Naive thymus-derived CD4-positive, alpha-beta T cell (primary cell): ENCODE measurements at regions of chrX and their contacts with region 1.

Region 1: DNA sequence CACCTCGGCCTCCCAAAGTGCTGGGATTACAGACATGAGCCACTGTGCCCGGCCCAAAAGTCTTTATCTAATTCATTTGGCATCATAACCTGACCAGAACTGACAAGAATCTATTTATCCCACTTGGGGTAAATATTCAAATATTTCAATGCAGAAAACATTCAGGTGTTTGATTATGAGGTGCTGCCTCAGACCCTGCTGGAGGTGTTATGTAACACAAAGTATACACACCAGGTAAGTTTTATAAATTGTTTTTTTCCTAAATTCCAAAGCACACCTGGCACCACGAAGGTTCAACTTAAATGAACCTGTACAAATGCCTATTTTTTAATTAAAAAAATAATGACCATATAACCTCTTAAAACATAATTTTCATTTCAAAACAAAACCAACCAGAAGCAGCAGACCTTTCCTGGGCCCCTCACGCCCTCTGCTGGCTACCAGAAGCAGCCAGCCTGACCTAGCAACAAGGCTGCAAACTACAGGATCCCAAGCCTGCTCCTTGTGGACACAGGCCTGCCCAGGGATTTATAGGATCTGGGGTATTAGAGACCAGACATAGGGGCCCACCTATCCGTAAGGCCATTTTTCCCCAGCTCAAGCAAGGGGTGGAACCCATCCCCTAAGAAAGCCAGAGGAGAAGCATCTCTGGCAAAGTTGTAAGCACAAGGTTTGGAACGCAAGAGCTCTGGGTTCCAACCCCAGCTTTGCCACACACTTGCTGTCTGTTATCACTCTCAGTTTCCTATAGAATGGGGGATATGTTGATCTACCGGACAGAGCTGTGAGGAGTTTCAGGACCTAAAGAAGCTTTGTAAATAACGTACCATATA is 11.7 kb downstream of the OTUD5 start:
- DNase-seq: peak; percentile 30 to 69 (median 46)
- ATAC-seq: peak; percentile 74
- H3K4me3 ChIP-seq: no peak overlapping the region
- H3K4me3 Mint-ChIP-seq: peak overlapping the region; percentile 25 to 61 (median 50)
- H3K27ac ChIP-seq: peak overlapping the region; percentile 22
- H3K27ac Mint-ChIP-seq: peak overlapping the region; percentile 44 to 88 (median 71)
- H3K4me1 ChIP-seq: peaks cover 23 to 25% of the 10 kb centered on the region in 2 donors
- H3K4me1 Mint-ChIP-seq: peaks cover 20 to 59% (median 48%) of the 10 kb centered on the region in 7 donors
- H3K27me3 ChIP-seq: no peaks in the 10 kb centered on the region
- H3K27me3 Mint-ChIP-seq: no peaks in the 10 kb centered on the region

Region 2: GRCh38 chrX:48648336-48648751 is 297.4 kb before region 1 on chrX:
- CTCF ChIA-PET with region 1: interaction called, 7 read pairs
- POLR2A ChIA-PET with region 1: interaction called, 5 read pairs
- intact Hi-C with region 1: loop called in 1 of 2 experiments (anchors 1 kb)
- DNase-seq: peak in 8 of 9 donors; percentile 17 to 54 (median 38)
- ATAC-seq: peak; percentile 70
- H3K4me3 ChIP-seq: no peak overlapping the region
- H3K4me3 Mint-ChIP-seq: no peak overlapping the region
- H3K27ac ChIP-seq: no peak overlapping the region
- H3K27ac Mint-ChIP-seq: peak overlapping the region in 3 of 9 donors; percentile 42 to 58 (median 53)
- H3K4me1 ChIP-seq: no peaks in the 10 kb centered on the region
- H3K4me1 Mint-ChIP-seq: peaks cover 0 to 18% (median 13%) of the 10 kb centered on the region in 7 donors
- H3K27me3 ChIP-seq: no peaks in the 10 kb centered on the region
- H3K27me3 Mint-ChIP-seq: no peaks in the 10 kb centered on the region

Region 3: GRCh38 chrX:48703642-48704481 is 241.9 kb before region 1 on chrX:
- CTCF ChIA-PET with region 1: no interaction called
- POLR2A ChIA-PET with region 1: no interaction called
- intact Hi-C with region 1: no loop called
- DNase-seq: no peak
- ATAC-seq: no peak
- H3K4me3 ChIP-seq: no peak overlapping the region
- H3K4me3 Mint-ChIP-seq: no peak overlapping the region
- H3K27ac ChIP-seq: no peak overlapping the region
- H3K27ac Mint-ChIP-seq: peak overlapping the region in 3 of 9 donors; percentile 9 to 60 (median 43)
- H3K4me1 ChIP-seq: no peaks in the 10 kb centered on the region
- H3K4me1 Mint-ChIP-seq: peaks cover 0 to 21% (median 12%) of the 10 kb centered on the region in 7 donors
- H3K27me3 ChIP-seq: no peaks in the 10 kb centered on the region
- H3K27me3 Mint-ChIP-seq: no peaks in the 10 kb centered on the region

Region 4: GRCh38 chrX:48854898-48855297 is 90.8 kb before region 1 on chrX:
- CTCF ChIA-PET with region 1: no interaction called
- POLR2A ChIA-PET with region 1: no interaction called
- intact Hi-C with region 1: loop called in 1 of 2 experiments (anchors 1 kb)
- DNase-seq: peak in 2 of 9 donors; percentile 16 to 17
- ATAC-seq: no peak
- H3K4me3 ChIP-seq: no peak overlapping the region
- H3K4me3 Mint-ChIP-seq: no peak overlapping the region
- H3K27ac ChIP-seq: no peak overlapping the region
- H3K27ac Mint-ChIP-seq: peak overlapping the region in 1 of 9 donors; percentile 33
- H3K4me1 ChIP-seq: no peaks in the 10 kb centered on the region
- H3K4me1 Mint-ChIP-seq: peaks cover 0 to 7% (median 6%) of the 10 kb centered on the region in 7 donors
- H3K27me3 ChIP-seq: no peaks in the 10 kb centered on the region
- H3K27me3 Mint-ChIP-seq: peaks cover 0 to 11% (median 4%) of the 10 kb centered on the region in 5 donors

Region 5: DNA sequence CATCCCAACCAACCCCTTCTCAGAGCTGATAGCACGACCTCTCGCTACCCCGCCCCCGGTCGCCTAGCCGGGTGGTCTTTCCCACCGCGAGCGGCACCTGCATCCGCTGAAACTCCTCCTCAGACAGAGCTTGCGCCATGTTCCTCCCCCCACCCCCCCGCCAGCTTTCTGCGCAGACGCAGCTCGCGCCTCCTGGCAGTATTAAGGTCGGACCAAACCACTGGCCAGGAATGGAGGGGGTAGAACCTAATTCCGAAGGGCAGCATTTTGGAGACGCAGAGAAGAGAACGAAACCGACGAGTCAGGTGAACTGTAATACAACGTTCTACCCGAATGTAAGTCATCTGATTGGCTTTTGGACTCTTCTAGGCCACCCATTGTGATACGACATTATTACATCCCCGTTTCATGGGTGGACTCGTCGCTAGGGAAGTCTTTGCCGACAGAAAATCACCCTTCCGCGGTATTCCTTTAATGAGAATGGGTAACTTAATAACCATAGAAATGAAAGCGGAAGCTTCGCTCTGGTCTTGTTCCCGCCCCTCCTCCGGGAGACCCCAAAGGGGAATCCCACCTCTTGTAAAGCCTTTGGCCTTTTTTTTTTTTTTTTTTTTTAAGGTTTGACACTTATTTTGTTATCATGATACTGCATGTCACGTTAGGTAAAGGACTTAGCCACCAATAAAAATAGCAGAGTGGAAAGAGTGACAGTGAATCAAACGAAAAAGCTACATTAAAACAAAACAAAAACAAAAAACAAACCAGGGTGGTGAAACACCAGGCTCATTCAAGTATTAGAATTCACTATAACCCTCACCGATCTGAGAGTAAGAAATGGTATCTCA is 56.6 kb after region 1 on chrX and contains the start of gene GRIPAP1:
- CTCF ChIA-PET with region 1: no interaction called
- POLR2A ChIA-PET with region 1: no interaction called
- intact Hi-C with region 1: no loop called
- DNase-seq: peak; percentile 61 to 87 (median 79)
- ATAC-seq: peak; percentile 88
- H3K4me3 ChIP-seq: peak within 1 kb of the TSS; percentile 97
- H3K4me3 Mint-ChIP-seq: peak within 1 kb of the TSS; percentile 94 to 99 (median 98)
- H3K27ac ChIP-seq: peak within 1 kb of the TSS; percentile 97
- H3K27ac Mint-ChIP-seq: peak within 1 kb of the TSS; percentile 92 to 100 (median 98)
- H3K4me1 ChIP-seq: peaks cover 9 to 10% of the 10 kb centered on the region in 2 donors
- H3K4me1 Mint-ChIP-seq: peaks cover 7 to 43% (median 32%) of the 10 kb centered on the region in 7 donors
- H3K27me3 ChIP-seq: no peaks in the 10 kb centered on the region
- H3K27me3 Mint-ChIP-seq: no peaks in the 10 kb centered on the region
- total RNA-seq, gene GRIPAP1: 103 to 108 (median 105) TPM

Region 6: DNA sequence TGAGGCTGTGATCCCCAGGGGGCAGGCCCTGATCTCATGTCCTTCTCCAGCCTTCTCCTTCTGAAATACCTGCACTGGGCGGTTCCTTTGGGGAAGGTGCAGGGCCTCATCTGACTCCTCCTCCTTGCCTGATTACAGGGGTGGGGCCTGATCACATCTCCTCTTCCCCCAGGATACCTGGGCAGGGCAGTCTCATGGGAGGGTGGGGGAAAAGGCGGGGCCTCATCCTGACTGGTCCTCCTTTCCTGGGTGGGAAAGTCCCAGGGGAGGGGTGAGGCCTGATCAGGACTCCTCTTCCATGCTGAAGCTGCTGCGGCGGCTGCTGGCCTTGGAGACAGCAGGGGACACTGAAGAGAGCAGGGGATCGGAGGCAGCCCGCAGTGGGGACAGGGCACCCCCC is 84.1 kb after region 1 on chrX:
- CTCF ChIA-PET with region 1: no interaction called
- POLR2A ChIA-PET with region 1: no interaction called
- intact Hi-C with region 1: no loop called
- DNase-seq: no peak
- ATAC-seq: no peak
- H3K4me3 ChIP-seq: no peak overlapping the region
- H3K4me3 Mint-ChIP-seq: no peak overlapping the region
- H3K27ac ChIP-seq: no peak overlapping the region
- H3K27ac Mint-ChIP-seq: no peak overlapping the region
- H3K4me1 ChIP-seq: no peaks in the 10 kb centered on the region
- H3K4me1 Mint-ChIP-seq: peaks cover 0 to 4% (median 0%) of the 10 kb centered on the region in 7 donors
- H3K27me3 ChIP-seq: no peaks in the 10 kb centered on the region
- H3K27me3 Mint-ChIP-seq: no peaks in the 10 kb centered on the region